ENCODE measurements at regions of chr6 and their contacts with region 1.

Region 1: DNA sequence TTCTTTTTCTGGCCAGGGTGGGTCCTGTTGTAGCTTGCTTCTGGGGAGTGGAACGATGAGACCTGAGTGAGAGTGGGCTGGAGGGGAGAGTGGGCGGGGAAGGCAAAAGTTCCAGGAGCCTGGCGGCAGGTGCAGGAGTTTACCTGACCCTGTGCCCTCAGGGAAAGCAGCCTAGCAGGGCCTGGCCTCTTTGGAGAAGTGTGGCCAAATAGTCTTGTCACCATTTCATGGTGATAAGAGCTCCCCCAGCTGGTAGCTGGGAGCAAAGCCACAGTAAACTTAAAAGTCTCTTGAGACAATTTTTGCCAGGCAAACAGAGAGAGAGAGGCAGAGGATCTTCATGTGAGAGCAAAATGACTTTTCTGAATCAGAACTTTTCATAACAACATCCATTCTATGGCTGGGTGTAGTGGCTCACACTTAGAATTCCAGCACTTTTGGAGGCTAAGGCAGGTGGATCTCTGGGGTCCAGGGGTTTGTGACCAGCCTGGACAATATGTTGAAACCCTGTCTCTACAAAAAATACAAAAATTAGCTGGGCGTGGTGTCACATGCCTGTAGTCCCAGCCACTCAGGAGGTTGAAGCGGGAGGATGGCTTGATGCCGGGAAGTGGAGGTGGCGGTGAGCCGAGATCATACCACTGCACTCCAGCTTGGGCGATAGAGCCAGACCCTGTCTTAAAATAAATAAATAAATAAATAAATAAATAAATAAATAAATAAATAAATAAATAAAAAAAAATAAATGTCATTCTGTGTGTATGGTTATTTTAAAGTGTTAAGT is 161.8 kb upstream of the SCGN start:
- DNase-seq: peak; percentile 59
- H3K4me3 Mint-ChIP-seq: no peak overlapping the region
- H3K27ac Mint-ChIP-seq: peak overlapping the region; percentile 0
- H3K4me1 Mint-ChIP-seq: peaks cover 7% of the 10 kb centered on the region
- H3K27me3 Mint-ChIP-seq: no peaks in the 10 kb centered on the region

Region 2: DNA sequence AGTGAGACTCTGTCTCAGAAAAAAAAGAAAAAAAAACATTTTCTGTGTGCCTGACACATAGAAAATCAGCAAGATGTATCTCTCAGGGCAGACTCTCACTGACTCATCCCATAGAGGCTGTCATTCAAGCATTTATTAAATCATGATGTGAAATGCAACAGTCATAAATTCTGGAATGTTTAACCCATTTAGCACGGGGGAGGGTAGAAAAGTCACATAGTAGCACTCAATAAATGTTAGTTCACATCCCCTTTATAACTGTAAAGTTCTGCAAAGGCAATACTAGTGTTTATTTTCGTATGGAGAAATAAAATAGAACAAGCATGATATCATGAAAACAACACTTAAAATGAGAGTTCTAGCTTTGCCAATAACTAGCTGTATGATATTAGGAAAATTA is 226.6 kb before region 1 on chr6:
- intact Hi-C with region 1: loop called (anchors 1 kb)
- DNase-seq: no peak
- H3K4me3 Mint-ChIP-seq: no peak overlapping the region
- H3K27ac Mint-ChIP-seq: no peak overlapping the region
- H3K4me1 Mint-ChIP-seq: peaks cover 7% of the 10 kb centered on the region
- H3K27me3 Mint-ChIP-seq: peaks cover 26% of the 10 kb centered on the region

Region 3: GRCh38 chr6:25334793-25335413 is 155.3 kb before region 1 on chr6:
- intact Hi-C with region 1: loop called (anchors 5 kb)
- DNase-seq: no peak
- H3K4me3 Mint-ChIP-seq: no peak overlapping the region
- H3K27ac Mint-ChIP-seq: no peak overlapping the region
- H3K4me1 Mint-ChIP-seq: no peaks in the 10 kb centered on the region
- H3K27me3 Mint-ChIP-seq: peaks cover 3% of the 10 kb centered on the region

Region 4: GRCh38 chr6:25469797-25470388 is 20.3 kb before region 1 on chr6:
- intact Hi-C with region 1: no loop called
- DNase-seq: no peak
- H3K4me3 Mint-ChIP-seq: no peak overlapping the region
- H3K27ac Mint-ChIP-seq: no peak overlapping the region
- H3K4me1 Mint-ChIP-seq: no peaks in the 10 kb centered on the region
- H3K27me3 Mint-ChIP-seq: no peaks in the 10 kb centered on the region

Region 5: DNA sequence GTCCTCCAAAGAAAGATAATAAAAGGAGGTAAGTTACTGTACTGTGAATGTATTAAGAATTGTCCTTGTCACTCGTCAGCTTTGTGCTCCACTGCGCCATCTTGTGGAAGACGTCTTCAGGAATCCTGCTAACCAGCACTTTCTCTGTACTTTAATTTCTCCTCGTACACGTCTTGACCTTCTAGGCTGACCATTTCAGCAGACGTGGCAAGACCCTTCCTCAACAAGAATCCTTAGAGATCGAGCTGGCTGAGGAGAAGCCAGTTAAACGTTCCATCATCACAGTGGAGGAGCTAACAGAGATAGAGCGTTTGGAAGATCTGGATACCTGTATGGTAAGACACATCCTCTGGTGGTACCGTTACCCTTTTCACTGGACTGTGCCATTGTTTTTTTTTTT is 66.3 kb after region 1 on chr6:
- intact Hi-C with region 1: loop called (anchors 1 kb)
- DNase-seq: peak; percentile 52
- H3K4me3 Mint-ChIP-seq: no peak overlapping the region
- H3K27ac Mint-ChIP-seq: no peak overlapping the region
- H3K4me1 Mint-ChIP-seq: no peaks in the 10 kb centered on the region
- H3K27me3 Mint-ChIP-seq: peaks cover 3% of the 10 kb centered on the region

Region 6: DNA sequence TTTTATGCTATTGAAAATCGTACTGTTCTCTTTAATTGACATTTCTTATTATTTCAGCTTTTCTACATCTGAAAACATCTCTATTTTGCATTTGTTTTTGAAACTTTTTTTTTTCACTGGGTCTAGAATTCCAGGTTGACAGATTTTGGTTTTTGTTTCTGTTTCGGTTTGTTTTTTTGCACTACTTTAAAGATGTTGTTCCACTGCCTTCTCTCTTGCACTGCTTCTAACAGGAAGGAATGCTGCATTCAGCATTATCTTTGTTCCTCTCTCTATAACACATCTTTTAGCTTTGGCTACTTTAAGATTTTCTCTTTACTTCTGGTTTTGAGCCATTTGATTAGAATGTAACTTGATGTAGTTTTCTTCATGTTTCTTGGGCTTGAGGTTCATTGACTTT is 361.8 kb after region 1 on chr6:
- intact Hi-C with region 1: no loop called
- DNase-seq: no peak
- H3K4me3 Mint-ChIP-seq: no peak overlapping the region
- H3K27ac Mint-ChIP-seq: no peak overlapping the region
- H3K4me1 Mint-ChIP-seq: peaks cover 13% of the 10 kb centered on the region
- H3K27me3 Mint-ChIP-seq: no peaks in the 10 kb centered on the region

Measured in activated T-helper 1 cell treated with anti-CD3 and anti-CD28 coated beads, Interleukin-12 subunit alpha, Interleukin-12 subunit beta, Interleukin-2, Interleukin-4 antibody, amounts not matched to agents 30 ng/mL and 10 ng/mL and 1 ng/mL, durations not matched to agents 14 hours and 24 hours and 36 hours (primary cell).